Aorta (tissue), 5 donors: ENCODE measurements at regions of chr1 and their contacts with region 1.

Region 1: GRCh38 chr1:115706587-115707425 is 61.7 kb downstream of the CASQ2 start:
- DNase-seq: no peak
- ATAC-seq: no peak
- H3K4me3 ChIP-seq: no peak overlapping the region
- H3K27ac ChIP-seq: no peak overlapping the region
- H3K4me1 ChIP-seq: no peaks in the 10 kb centered on the region
- H3K27me3 ChIP-seq: no peaks in the 10 kb centered on the region

Region 2: DNA sequence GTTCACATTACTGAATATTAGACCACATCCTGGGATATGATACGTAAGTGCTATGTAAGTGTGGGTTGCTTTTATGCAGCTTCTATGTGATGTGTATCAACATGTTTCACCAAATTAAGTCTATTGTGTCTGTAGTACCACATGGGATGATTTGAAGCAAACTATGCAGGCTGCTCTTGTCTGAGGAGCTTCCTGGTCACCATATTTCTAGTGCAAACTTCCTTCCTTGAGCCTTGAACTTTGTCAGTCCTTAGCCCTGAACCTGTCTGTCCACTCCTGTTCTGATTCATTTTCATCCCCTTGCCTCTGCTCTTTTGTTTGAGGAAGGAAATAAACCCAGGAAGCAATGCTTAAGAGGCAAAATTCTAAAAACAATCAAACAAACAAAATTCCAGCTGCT is 182.6 kb before region 1 on chr1:
- intact Hi-C with region 1: no loop called
- DNase-seq: no peak
- ATAC-seq: no peak
- H3K4me3 ChIP-seq: no peak overlapping the region
- H3K27ac ChIP-seq: no peak overlapping the region
- H3K4me1 ChIP-seq: no peaks in the 10 kb centered on the region
- H3K27me3 ChIP-seq: no peaks in the 10 kb centered on the region

Region 3: DNA sequence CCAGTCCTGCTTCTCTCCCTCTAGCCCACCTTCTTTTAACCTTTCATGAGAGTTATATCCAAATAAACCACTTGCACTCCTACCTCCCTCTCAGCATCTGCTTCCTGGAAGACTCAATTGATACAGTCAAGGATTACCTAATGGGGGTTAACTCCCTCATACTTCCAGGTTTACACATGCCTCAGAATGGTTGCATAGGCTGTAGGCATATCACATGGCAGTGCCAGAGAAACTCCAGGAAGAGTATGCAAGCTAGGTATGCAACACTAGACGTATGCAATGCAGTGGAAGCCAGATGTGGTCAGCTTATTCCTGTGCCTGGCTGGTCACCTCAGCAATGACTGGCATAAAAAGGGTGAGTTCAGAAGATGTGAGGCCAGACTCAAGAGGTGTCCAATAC is 97.8 kb before region 1 on chr1:
- intact Hi-C with region 1: loop called (anchors 2 to 5 kb)
- DNase-seq: no peak
- ATAC-seq: no peak
- H3K4me3 ChIP-seq: no peak overlapping the region
- H3K27ac ChIP-seq: no peak overlapping the region
- H3K4me1 ChIP-seq: no peaks in the 10 kb centered on the region
- H3K27me3 ChIP-seq: no peaks in the 10 kb centered on the region

Region 4: GRCh38 chr1:115641762-115642167 is 65.0 kb before region 1 on chr1 and contains the start of gene VANGL1:
- intact Hi-C with region 1: loop called in 1 of 2 experiments (anchors 2 kb)
- DNase-seq: peak; percentile 80 to 92
- ATAC-seq: peak; percentile 85
- H3K4me3 ChIP-seq: peak within 1 kb of the TSS; percentile 32 to 96
- H3K27ac ChIP-seq: peak within 1 kb of the TSS in 1 of 2 donors; percentile 4
- H3K4me1 ChIP-seq: peaks cover 0 to 3% of the 10 kb centered on the region in 2 donors
- H3K27me3 ChIP-seq: no peaks in the 10 kb centered on the region
- total RNA-seq, gene VANGL1: 10.5 to 14.8 TPM

Region 5: GRCh38 chr1:115829023-115829693 is 122.4 kb after region 1 on chr1:
- intact Hi-C with region 1: no loop called
- DNase-seq: peak in 1 of 2 donors; percentile 62
- ATAC-seq: peak; percentile 63
- H3K4me3 ChIP-seq: no peak overlapping the region
- H3K27ac ChIP-seq: no peak overlapping the region
- H3K4me1 ChIP-seq: no peaks in the 10 kb centered on the region
- H3K27me3 ChIP-seq: no peaks in the 10 kb centered on the region